ENCODE measurements at regions of chr11 and their contacts with region 1.

Region 1: DNA sequence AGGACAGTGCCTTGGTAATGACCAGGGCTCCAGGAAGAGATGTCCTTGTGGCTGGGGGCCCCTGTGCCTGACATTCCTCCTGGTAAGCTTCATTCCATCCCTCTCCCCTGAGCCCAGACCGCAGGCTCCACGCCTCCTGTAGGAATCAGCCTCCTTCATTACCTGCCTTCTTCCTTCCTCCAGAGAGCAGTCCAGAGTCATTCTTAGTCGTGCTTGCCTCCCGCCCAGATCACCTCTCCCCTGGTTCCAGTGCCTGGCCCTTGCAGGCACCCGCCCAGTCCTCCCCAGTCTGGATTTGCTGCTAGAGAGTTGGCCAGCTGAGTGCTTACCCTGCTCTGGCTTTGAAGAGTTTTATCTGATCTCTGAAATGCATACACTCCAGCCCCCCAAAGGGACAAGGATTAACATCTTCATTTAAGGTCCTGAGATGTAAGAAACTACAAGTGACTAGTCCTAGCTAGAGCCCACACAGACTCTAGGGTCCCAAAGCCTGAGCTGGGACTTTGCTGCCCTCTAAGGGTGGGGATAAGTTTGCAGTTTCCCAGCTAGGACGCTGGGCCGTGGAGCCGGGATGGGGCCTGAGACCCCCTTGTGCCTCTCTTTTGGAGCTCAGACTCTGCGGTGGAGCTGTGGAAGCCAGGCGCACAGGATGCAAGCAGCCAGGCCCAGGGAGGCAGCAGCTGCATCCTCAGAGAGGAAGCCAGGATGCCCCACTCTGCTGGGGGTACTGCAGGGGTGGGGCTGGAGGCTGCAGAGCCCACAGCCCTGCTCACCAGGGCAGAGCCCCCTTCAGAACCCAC is 1.6 kb downstream of the NR1H3 start:
- DNase-seq: peak; percentile 54
- ATAC-seq: peak; percentile 32

Region 2: DNA sequence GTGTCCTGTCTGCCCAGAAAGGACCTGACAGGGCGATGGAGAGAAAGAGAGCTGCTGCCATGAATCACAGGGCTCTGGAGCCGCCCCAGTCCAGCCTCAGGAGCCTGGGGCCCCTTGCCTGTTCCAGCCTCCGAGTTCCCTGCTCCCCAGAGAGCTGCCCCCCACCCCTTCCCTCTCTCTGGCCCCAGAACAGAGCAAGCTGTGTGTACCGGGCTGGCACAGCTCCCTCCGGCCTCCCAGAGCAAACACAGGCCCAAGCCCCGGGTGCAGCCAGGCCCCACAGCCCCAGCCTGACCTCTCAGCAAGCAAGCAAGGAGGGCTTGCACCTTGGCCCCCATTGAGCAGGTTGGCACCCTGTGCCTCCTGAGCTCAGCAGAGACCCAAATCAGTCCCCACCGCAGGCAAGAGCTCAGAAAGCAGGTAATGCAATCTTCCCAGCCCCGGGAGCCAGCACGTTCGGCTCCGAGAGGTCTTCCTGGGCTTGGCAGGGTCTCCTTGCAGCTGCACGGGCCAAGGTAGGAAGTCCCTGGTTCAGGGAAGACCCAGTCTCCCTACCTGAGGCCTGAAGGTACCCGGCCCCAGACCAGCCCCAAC is 74.6 kb before region 1 on chr11:
- intact Hi-C with region 1: loop called (anchors 5 kb)
- DNase-seq: peak; percentile 59
- ATAC-seq: peak; percentile 2

Region 3: DNA sequence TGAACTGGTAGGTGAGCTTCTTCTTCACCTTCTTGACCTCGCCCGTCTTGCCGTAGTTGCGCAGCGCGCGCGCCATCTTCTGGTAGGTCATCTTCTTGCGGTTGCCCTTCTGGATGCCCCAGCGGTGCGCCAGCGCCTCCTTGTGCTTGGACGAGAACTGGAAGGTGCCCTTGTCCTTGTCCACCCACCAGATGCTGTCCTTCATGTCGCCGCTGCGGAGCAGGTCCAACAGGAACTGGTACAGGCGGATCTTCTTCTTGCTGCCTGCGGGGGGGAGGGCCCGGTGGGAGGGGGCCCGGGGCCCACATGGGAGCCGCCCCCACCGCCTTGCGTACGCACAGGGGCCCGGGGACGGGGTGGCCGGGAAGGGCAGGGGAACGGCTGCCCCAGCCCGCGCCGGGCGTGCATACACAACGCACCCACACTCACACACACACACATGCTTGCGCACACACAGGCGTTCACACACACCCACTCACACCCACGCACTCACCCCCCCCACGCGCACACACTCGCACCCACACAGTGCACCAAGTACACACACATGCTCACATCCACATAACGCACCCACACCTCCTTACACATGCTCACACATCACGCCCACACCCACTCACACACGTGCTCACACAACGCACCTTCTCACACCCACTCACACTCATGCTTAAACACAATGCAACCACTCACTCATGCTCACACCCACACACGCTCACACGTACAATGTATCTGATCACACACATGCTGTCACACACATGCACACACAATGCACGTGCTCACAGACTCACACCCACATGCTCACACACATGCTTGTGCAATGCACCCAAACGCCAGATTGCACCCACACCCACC is 96.1 kb after region 1 on chr11:
- intact Hi-C with region 1: loop called (anchors 10 kb)
- DNase-seq: peak; percentile 98
- ATAC-seq: peak; percentile 65

Measured in Right ventricle myocardium superior (tissue), 1 donor.